CD8-positive, alpha-beta memory T cell (primary cell): ENCODE measurements at regions of chr11 and their contacts with region 1.

Region 1: DNA sequence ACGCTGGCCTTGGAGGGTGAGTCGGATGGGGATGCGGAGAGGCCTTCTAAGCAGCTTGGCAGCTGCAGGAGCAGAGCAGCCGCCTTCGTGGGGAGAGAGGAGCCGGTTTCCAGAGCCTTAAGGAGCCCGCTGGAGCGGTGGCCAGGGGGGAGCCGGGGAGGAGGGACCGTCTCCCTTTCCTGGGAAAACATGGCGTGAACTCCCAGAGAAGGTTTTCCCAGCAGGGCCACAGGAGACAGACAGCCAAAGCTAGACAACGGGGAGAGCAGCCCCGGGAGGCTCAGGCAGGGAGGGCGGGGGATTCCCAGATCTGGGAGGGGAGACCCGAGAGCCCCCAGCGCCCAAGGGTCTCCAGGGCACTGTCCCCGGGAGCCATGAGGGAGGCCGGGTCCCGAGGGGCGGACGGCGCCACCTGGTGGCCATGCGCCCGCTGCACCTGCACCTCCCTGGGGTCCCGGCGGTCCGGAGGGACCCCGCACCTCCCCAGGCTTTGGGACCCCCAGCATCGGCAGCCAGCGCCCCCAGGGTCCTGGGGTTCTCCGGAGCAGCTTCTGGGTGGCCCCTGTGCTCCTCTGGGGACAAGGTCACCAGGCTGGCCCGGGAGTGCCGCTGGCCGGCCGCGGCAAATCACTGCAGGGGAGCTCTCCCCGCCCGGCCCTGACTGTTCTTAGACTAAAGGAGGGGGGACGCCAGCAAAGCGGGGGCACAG is 2.4 kb upstream of the SYT8 start:
- DNase-seq: peak; percentile 57 to 73 (median 67)
- H3K4me3 ChIP-seq: no peak overlapping the region
- H3K4me3 Mint-ChIP-seq: no peak overlapping the region
- H3K27ac ChIP-seq: no peak overlapping the region
- H3K27ac Mint-ChIP-seq: peak overlapping the region in 1 of 8 donors; percentile 15
- H3K4me1 ChIP-seq: peaks cover 1% of the 10 kb centered on the region
- H3K4me1 Mint-ChIP-seq: peaks cover 0 to 2% (median 0%) of the 10 kb centered on the region in 3 donors
- H3K27me3 ChIP-seq: no peaks in the 10 kb centered on the region
- H3K27me3 Mint-ChIP-seq: peaks cover 15% of the 10 kb centered on the region in 2 donors

Region 2: GRCh38 chr11:1682225-1682905 is 150.0 kb before region 1 on chr11:
- CTCF ChIA-PET with region 1: interaction called, 10 read pairs
- POLR2A ChIA-PET with region 1: no interaction called
- DNase-seq: no peak
- H3K4me3 ChIP-seq: no peak overlapping the region
- H3K4me3 Mint-ChIP-seq: no peak overlapping the region
- H3K27ac ChIP-seq: no peak overlapping the region
- H3K27ac Mint-ChIP-seq: no peak overlapping the region
- H3K4me1 ChIP-seq: no peaks in the 10 kb centered on the region
- H3K4me1 Mint-ChIP-seq: no peaks in the 10 kb centered on the region
- H3K27me3 ChIP-seq: no peaks in the 10 kb centered on the region
- H3K27me3 Mint-ChIP-seq: peaks cover 8 to 17% of the 10 kb centered on the region in 2 donors

Region 3: DNA sequence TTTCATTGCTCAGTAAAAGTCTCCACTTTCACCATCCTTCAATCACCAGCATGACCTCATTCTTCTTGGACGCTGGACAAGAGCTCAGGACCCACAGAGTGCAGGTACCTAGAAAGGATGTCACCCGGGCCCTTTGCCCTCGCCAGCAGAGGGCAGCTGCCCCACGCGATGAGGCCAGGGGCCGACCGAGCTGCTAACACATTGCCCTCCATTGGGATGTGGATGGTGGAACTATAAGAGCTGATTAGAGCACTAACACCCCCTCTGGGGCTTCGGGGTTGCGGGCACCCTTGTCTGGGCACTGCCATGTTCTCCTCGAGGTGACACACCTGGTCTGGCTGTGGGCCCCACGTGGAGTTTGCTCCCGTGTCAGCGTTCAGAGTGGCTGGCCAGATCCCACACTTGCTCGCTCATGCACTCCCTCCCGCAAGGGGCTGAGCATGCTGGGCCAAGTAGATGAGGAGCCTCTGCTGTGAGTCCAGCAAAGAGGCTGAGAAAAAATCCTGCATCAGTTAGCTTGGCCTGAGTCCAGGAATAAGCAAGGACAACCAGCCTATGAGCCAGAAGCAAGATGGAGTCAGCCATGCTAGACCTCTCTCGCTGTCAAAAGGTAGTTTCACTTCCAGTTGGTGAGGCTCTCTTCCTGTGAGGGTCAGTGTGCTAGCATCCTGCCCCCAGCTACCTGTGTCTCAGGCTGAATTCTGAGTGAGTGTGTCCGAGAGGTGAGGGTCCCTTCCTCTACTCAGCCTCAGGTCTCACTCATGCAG is 125.5 kb before region 1 on chr11:
- CTCF ChIA-PET with region 1: interaction called, 29 read pairs
- POLR2A ChIA-PET with region 1: no interaction called
- DNase-seq: no peak
- H3K4me3 ChIP-seq: no peak overlapping the region
- H3K4me3 Mint-ChIP-seq: no peak overlapping the region
- H3K27ac ChIP-seq: no peak overlapping the region
- H3K27ac Mint-ChIP-seq: no peak overlapping the region
- H3K4me1 ChIP-seq: no peaks in the 10 kb centered on the region
- H3K4me1 Mint-ChIP-seq: peaks cover 2 to 20% (median 13%) of the 10 kb centered on the region in 3 donors
- H3K27me3 ChIP-seq: peaks cover 4% of the 10 kb centered on the region
- H3K27me3 Mint-ChIP-seq: peaks cover 13% of the 10 kb centered on the region in 2 donors

Region 4: GRCh38 chr11:1921574-1922141 is 89.3 kb after region 1 on chr11:
- CTCF ChIA-PET with region 1: interaction called, 10 read pairs
- POLR2A ChIA-PET with region 1: no interaction called
- DNase-seq: no peak
- H3K4me3 ChIP-seq: no peak overlapping the region
- H3K4me3 Mint-ChIP-seq: no peak overlapping the region
- H3K27ac ChIP-seq: no peak overlapping the region
- H3K27ac Mint-ChIP-seq: peak overlapping the region in 1 of 8 donors; percentile 20
- H3K4me1 ChIP-seq: no peaks in the 10 kb centered on the region
- H3K4me1 Mint-ChIP-seq: peaks cover 0 to 25% (median 11%) of the 10 kb centered on the region in 3 donors
- H3K27me3 ChIP-seq: no peaks in the 10 kb centered on the region
- H3K27me3 Mint-ChIP-seq: peaks cover 9 to 10% of the 10 kb centered on the region in 2 donors

Region 5: DNA sequence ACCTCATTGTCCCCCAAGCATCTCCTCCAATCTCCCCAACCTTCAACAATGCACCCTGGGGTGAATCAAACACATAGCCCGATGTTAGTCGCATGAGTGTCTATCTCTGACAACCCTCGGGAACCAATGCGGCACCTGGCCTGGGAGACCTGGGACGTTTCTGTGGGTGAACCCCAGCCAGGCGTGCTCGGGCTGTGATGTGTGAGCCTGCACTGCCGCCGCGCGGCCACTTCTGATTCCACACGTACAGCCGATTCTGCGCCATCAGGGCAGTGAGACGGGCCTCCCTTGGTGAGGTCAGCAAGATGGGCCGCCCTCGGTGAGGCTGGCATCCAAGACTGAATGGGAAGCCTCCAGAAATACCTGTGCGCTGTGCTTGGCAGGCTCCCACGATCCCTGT is 170.4 kb after region 1 on chr11:
- CTCF ChIA-PET with region 1: interaction called, 40 read pairs
- POLR2A ChIA-PET with region 1: no interaction called
- DNase-seq: no peak
- H3K4me3 ChIP-seq: no peak overlapping the region
- H3K4me3 Mint-ChIP-seq: no peak overlapping the region
- H3K27ac ChIP-seq: no peak overlapping the region
- H3K27ac Mint-ChIP-seq: no peak overlapping the region
- H3K4me1 ChIP-seq: no peaks in the 10 kb centered on the region
- H3K4me1 Mint-ChIP-seq: no peaks in the 10 kb centered on the region
- H3K27me3 ChIP-seq: no peaks in the 10 kb centered on the region
- H3K27me3 Mint-ChIP-seq: no peaks in the 10 kb centered on the region